AG04449 (cell line): ENCODE measurements at regions of chr17 and their contacts with region 1.

Region 1: GRCh38 chr17:59829217-59830006 is 63.3 kb downstream of the TUBD1 start:
- DNase-seq: peak; percentile 98
- H3K4me3 ChIP-seq: peak overlapping the region; percentile 37
- CTCF ChIP-seq: no peak

Region 2: DNA sequence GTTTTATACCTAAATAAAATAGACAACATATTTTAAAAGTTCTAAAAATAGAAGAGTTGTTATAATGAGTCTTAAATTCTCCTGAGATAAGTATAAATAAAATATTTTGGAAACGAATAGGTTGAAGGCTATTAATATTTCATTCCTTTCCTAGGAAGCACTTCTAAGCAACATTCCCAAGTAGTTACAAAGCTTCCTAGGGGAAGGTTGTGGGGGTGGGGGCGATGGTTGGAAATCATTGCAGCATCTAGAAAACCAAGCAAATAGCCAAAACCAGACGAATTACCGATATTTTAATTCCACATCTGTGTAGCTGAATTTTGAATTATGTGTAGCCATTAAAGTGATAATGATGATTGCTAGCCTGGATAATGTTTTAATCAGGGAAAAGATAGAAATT is 149.1 kb before region 1 on chr17:
- CTCF ChIA-PET with region 1: no interaction called
- POLR2A ChIA-PET with region 1: no interaction called
- DNase-seq: no peak
- H3K4me3 ChIP-seq: no peak overlapping the region
- CTCF ChIP-seq: no peak

Region 3: DNA sequence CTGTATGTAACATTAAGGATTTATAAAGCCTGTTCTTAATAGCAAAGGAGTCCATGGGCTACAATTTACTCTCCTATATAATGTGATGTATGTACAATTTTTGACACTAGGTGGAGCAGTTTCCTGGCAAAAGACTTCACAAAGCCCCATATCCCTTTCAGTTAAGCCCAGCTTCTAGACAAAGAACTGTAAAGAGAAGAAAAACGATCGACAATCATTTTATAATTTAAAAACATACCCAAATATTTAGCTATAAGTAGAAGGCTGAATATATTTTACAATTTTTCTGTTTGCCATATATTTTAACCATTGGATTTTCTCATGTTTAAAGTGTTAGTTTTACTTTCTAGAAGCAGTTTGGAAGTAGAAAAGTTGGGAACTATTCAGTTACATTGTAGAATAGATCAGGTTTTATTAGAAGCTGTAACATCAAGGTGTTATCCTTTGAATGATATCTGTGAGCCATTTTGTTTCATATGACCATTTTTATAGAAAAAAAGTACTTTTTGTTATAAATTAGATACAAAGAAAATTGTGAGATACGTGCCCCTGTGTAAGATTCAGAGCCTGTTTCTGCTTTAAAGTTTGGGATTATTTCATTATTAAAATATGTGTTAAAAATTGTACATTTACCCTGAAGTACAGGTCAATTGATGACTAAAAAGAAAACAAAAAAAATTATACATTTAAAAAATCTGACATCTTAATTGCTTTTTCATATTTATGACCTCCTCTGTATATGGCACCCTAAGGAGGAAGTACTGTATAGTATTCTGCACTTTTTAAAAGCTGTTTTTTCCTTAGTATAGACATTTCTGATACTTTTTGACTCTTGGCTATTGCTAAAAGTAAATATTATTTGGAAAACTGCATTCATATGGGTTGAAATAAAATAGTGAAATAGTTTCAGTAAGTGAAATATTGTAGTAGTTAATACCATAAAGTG is 75.6 kb before region 1 on chr17:
- CTCF ChIA-PET with region 1: interaction called, 48 read pairs
- POLR2A ChIA-PET with region 1: interaction called, 17 read pairs
- DNase-seq: peak; percentile 65
- H3K4me3 ChIP-seq: peak overlapping the region; percentile 3; the same call in 1 of the 2 replicates
- CTCF ChIP-seq: peak; percentile 40

Region 4: DNA sequence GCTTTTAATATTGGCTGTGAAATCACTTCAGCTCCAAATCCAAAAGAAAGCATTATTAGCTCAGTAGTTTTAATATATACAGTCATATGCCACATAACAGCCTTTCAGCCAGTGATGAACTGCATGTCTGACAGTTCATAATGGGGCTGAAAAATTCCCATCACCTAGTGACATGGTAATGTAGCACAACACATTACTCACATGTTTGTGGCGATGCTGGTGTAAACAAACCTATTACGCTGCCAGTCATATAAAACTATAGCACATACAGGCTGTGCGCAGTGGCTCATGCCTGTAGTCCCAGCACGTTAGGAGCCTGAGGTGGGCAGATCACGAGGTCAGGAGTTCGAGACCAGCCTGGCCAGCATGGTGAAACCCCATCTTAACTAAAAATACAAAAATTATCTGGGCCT is 28.9 kb before region 1 on chr17:
- CTCF ChIA-PET with region 1: no interaction called
- POLR2A ChIA-PET with region 1: no interaction called
- DNase-seq: no peak
- H3K4me3 ChIP-seq: no peak overlapping the region
- CTCF ChIP-seq: no peak